T-cell (primary cell): ENCODE measurements at regions of chr15 and their contacts with region 1.

Region 1: DNA sequence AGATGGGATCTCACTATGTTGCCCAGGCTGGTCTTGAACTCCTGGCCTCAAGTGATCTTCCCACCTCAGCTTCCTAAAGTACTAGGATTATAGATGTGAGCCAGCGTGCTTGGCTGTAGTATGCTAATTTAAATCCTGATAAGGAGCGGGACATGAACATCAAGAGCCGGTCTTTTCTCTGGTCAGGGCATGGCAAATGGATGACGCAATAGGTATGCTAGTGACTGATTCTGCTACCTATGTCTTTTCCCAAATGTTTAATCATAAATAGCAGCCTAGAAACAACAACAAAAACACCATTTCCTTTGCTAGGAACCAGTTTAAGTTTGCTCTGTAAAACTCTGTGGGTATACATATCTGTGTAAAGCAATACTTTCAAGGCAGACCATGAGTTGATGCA is 64.7 kb downstream of the STARD9 start:
- DNase-seq: no peak
- ATAC-seq: no peak
- H3K4me3 ChIP-seq: no peak overlapping the region
- H3K4me3 Mint-ChIP-seq: no peak overlapping the region
- H3K27ac ChIP-seq: no peak overlapping the region
- H3K27ac Mint-ChIP-seq: no peak overlapping the region
- H3K4me1 ChIP-seq: no peaks in the 10 kb centered on the region
- H3K4me1 Mint-ChIP-seq: no peaks in the 10 kb centered on the region
- H3K27me3 ChIP-seq: no peaks in the 10 kb centered on the region
- H3K27me3 Mint-ChIP-seq: no peaks in the 10 kb centered on the region

Region 2: DNA sequence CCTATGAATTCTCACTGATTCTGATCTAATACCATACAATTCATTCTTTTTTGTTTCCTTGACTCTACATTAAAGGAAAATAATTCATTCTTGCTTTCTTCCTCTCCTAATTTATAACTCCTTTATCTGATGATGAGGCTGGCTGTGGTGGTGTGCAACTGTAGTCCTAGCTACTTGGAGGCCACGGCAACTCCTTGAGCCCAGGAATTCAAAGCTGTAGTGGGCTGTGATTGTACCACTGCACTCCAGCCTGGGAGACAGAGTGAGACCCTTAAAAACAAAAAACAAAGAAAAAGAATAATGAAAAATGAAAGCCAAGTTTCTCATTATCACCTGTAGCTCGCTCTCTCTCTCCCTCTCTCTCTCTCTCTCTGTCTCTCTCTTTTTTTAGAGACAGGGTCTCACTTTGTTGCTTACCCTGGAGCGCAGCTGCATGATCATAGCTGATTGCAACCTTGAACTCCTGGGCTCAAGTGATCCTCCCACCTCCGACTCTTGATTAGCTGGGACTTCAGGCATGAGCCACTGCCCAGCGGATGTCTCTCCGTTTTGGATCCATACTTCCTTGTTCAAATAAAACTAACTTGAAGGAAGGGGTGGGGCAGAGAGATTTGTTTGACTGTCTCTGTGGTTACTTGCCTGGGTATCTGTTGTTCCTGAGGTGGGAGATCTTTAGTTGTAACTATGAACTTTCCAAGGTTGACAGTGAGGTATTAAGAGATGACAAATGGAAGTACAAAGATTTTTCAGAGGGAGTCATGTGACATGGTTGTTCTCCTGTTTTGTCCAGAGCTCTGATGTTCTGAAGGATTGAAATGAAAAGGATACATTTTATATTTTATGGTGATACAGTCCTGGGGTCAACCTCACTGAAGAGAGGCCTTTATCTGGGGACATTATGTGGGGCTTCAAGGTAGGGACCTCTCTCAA is 17.8 kb before region 1 on chr15:
- CTCF ChIA-PET with region 1: interaction called in 1 of 2 experiments, 10 read pairs
- POLR2A ChIA-PET with region 1: no interaction called
- DNase-seq: no peak
- ATAC-seq: no peak
- H3K4me3 ChIP-seq: no peak overlapping the region
- H3K4me3 Mint-ChIP-seq: no peak overlapping the region
- H3K27ac ChIP-seq: no peak overlapping the region
- H3K27ac Mint-ChIP-seq: no peak overlapping the region
- H3K4me1 ChIP-seq: no peaks in the 10 kb centered on the region
- H3K4me1 Mint-ChIP-seq: peaks cover 0 to 2% (median 0%) of the 10 kb centered on the region in 3 donors
- H3K27me3 ChIP-seq: no peaks in the 10 kb centered on the region
- H3K27me3 Mint-ChIP-seq: no peaks in the 10 kb centered on the region